Activated CD4-positive, alpha-beta T cell treated with anti-CD3 and anti-CD28 coated beads, Interleukin-2, amount 10 ng/mL, durations not matched to agents 24 days and 14 days (primary cell): ENCODE measurements at regions of chr10 and their contacts with region 1.

Region 1: GRCh38 chr10:104337974-104338735 is at the start of gene ITPRIP:
- DNase-seq: peak; percentile 93
- H3K4me3 Mint-ChIP-seq: peak within 1 kb of the TSS; percentile 97
- H3K27ac Mint-ChIP-seq: peak within 1 kb of the TSS; percentile 100
- H3K4me1 Mint-ChIP-seq: peaks cover 51% of the 10 kb centered on the region
- H3K27me3 Mint-ChIP-seq: peaks cover 7% of the 10 kb centered on the region
- total RNA-seq, gene ITPRIP: 14.7 and 15.4 TPM in 2 replicates

Region 2: DNA sequence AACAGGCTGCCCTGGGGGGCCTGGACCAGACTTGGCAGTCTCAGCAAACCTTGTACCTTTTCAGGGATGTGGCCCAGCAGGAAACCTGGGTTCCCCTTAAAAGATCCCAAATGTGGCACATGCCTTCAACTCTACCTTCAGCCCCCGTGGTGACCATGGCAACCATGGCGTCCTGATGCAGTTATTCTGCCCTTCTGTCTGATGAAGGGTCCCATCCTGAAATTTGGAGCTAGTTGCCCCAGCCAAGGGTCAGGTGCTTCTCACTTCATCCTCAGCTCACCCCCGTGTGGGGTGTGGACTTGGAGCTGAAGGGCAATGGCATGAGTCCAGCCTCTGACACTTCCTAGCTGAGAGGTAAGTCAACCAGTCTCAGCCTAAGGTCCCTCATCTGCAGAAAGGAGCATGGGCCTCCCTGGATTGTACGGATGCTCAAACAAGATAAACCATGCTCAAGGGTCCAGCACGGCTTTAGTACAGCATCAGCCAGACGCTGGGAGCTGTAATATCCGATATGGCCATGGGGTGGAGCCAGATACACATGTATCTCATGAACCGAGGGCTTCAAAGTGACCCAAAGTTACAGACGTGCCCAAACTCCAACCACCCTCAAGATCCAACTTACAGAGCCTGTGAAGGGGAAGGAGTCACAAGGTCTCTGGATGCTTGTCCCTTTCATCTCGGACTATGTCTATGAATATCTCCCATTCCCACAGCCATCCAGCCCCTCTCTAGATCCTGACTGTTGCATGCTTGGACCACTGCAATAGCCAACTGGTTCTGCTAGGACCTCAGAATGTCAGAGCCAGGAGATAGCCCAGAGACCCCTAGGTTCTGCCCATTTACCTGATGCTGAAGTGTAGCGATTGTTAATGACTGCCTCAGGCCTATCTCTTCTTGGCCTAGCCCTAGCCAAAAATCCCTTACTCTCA is 625.3 kb before region 1 on chr10:
- intact Hi-C with region 1: no loop called
- DNase-seq: peak; percentile 95
- H3K4me3 Mint-ChIP-seq: no peak overlapping the region
- H3K27ac Mint-ChIP-seq: no peak overlapping the region
- H3K4me1 Mint-ChIP-seq: peaks cover 8% of the 10 kb centered on the region
- H3K27me3 Mint-ChIP-seq: no peaks in the 10 kb centered on the region

Region 3: DNA sequence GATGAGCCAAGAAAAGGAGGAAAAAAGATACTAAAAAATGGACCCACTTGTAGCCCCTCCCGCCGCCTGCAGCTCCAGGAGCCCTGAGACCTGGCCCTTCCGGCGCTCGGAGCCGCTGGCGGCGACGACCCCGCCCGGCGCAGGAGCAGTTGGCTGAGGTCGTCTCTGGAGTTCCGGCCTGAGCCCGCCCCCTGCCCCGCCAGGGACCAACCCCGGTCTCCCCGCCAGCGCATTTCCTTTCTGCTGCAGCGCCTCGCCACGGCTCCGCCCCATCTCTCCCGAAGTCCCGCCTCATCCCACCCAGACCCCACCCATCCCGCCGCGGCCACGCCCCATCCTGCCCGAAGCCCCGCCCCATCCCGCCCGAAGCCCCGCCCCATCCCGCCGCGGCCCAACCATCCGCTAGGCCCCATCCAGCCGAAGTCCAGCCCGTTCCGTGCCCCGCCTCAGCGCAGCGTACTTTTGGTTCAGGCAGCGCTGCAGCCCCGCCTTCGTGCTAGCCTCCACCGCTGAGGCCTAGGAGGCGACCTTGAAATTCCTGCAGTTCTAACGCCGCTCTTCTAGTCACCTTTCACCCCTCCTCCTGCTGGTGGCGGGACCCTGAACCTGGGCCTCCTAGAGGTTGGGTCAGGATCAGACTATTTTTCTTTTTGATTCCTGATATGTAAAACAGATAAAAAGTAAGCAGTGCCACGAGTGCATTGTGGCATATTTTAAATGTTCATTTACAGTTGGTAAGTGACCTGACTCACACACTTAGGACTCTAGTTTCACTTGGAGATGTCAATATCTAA is 419.9 kb before region 1 on chr10 and contains the start of gene STN1:
- intact Hi-C with region 1: loop called (anchors 10 kb)
- DNase-seq: peak; percentile 98
- H3K4me3 Mint-ChIP-seq: peak within 1 kb of the TSS; percentile 97
- H3K27ac Mint-ChIP-seq: peak within 1 kb of the TSS; percentile 97
- H3K4me1 Mint-ChIP-seq: peaks cover 33% of the 10 kb centered on the region
- H3K27me3 Mint-ChIP-seq: no peaks in the 10 kb centered on the region
- total RNA-seq, gene STN1: 23.6 and 24.1 TPM in 2 replicates

Region 4: GRCh38 chr10:104291439-104291951 is 46.7 kb before region 1 on chr10:
- intact Hi-C with region 1: loop called (anchors 1 kb)
- DNase-seq: peak; percentile 96
- H3K4me3 Mint-ChIP-seq: no peak overlapping the region
- H3K27ac Mint-ChIP-seq: no peak overlapping the region
- H3K4me1 Mint-ChIP-seq: peaks cover 13% of the 10 kb centered on the region
- H3K27me3 Mint-ChIP-seq: peaks cover 32% of the 10 kb centered on the region

Region 5: DNA sequence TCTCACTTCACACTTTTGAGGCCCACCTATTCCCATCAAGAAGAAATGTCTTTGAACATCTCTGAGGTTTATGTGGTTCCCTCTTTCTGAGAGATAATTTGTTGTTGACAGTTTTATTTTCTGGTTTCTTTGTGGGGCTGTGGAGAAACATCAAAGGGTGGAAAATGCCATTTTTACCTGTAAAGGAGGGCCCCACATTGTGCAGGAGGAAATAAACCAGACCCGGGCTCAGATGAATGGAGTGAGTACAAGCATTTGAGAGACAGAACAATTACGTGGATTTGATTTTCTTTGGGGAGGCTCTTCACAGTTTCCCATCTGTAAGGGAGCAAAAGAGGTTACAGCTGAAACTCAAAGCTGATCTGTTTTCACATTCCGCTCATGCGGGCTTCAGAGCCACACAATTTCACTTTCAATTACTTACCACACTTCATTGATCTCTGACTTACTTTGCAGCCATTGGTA is 29.7 kb before region 1 on chr10:
- intact Hi-C with region 1: loop called (anchors 1 kb)
- DNase-seq: peak; percentile 86
- H3K4me3 Mint-ChIP-seq: peak overlapping the region; percentile 78
- H3K27ac Mint-ChIP-seq: peak overlapping the region; percentile 71
- H3K4me1 Mint-ChIP-seq: peaks cover 64% of the 10 kb centered on the region
- H3K27me3 Mint-ChIP-seq: no peaks in the 10 kb centered on the region